Activated CD8-positive, alpha-beta T cell treated with anti-CD3 and anti-CD28 coated beads for 36 hours (primary cell): ENCODE measurements at regions of chr2 and their contacts with region 1.

Region 1: GRCh38 chr2:73907840-73908452 is 15.1 kb downstream of the ACTG2 start:
- DNase-seq: peak; percentile 84
- ATAC-seq: peak; percentile 95
- H3K4me3 Mint-ChIP-seq: no peak overlapping the region
- H3K27ac Mint-ChIP-seq: peak overlapping the region; percentile 75
- H3K4me1 Mint-ChIP-seq: peaks cover 10% of the 10 kb centered on the region
- H3K27me3 Mint-ChIP-seq: no peaks in the 10 kb centered on the region
- CTCF ChIP-seq: peak; percentile 48

Region 2: GRCh38 chr2:73920577-73921545 is 12.9 kb after region 1 on chr2:
- CTCF ChIA-PET with region 1: interaction called, 12 read pairs
- POLR2A ChIA-PET with region 1: interaction called, 3 read pairs
- intact Hi-C with region 1: no loop called
- DNase-seq: peak; percentile 74
- ATAC-seq: peak; percentile 89
- H3K4me3 Mint-ChIP-seq: no peak overlapping the region
- H3K27ac Mint-ChIP-seq: no peak overlapping the region
- H3K4me1 Mint-ChIP-seq: peaks cover 8% of the 10 kb centered on the region
- H3K27me3 Mint-ChIP-seq: no peaks in the 10 kb centered on the region
- CTCF ChIP-seq: peak; percentile 57

Region 3: DNA sequence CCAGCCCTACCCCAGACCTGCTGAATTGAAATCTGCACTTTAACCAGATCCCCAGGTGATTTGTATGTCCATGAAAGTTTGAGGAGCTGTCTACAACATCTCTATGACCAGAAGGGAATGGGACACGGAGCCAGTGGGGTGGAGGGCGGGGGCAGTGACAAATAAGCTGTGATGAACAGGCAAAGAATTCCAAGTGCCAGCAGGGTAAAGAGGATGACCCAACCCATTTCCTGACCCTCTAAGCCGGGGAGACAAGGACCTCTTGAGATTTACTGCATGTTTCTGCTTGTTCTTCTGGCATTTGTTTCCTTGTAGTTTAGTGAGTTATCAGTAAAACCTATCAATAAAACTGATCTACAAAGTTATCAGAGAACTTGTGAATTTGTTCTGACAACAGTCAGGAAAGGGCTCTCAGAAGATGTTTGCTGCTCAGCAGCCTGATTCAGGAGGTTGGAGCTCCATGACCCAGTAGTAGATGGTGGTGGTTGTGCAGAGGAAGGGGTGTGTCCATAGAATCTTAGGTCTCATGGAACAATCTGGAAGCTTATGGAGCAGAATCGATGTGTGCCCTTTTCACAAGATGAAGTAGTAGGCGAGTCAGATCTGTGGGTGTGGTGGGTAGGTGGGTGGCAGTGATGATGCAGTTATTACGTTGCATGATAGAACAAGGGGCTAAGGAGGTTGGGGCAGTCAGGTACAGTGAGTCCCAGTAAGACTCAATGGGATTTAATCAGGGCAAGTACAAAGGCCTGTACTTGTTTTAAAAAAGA is 85.6 kb after region 1 on chr2:
- CTCF ChIA-PET with region 1: interaction called, 22 read pairs
- POLR2A ChIA-PET with region 1: interaction called, 3 read pairs
- intact Hi-C with region 1: no loop called
- DNase-seq: peak; percentile 47
- ATAC-seq: peak; percentile 43
- H3K4me3 Mint-ChIP-seq: no peak overlapping the region
- H3K27ac Mint-ChIP-seq: peak overlapping the region; percentile 59
- H3K4me1 Mint-ChIP-seq: peaks cover 71% of the 10 kb centered on the region
- H3K27me3 Mint-ChIP-seq: no peaks in the 10 kb centered on the region
- CTCF ChIP-seq: no peak

Region 4: DNA sequence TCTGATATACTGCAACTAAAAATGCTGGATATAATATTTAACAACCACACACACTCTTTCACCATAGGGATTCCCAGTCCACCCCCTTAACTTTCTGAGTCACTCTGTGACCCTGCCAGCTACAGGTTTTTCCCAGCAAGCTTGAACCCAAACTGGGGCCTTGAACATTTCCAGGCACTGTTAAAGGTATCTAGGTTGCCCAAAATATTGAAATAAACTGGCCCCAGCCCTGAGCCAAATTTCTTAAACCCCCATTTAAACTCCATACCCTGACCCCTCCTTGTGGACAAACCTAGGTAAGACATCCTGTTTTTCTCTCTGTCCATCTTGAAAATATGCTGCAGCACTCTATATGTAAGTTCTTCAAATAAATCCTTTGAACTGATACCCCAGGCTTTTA is 491.8 kb after region 1 on chr2:
- CTCF ChIA-PET with region 1: no interaction called
- POLR2A ChIA-PET with region 1: no interaction called
- intact Hi-C with region 1: no loop called
- DNase-seq: no peak
- ATAC-seq: peak; percentile 85
- H3K4me3 Mint-ChIP-seq: no peak overlapping the region
- H3K27ac Mint-ChIP-seq: no peak overlapping the region
- H3K4me1 Mint-ChIP-seq: peaks cover 2% of the 10 kb centered on the region
- H3K27me3 Mint-ChIP-seq: no peaks in the 10 kb centered on the region
- CTCF ChIP-seq: peak; percentile 67